ENCODE measurements at regions of chr1 and their contacts with region 1.

Region 1: GRCh38 chr1:66764994-66765578 is 12.8 kb downstream of the DYNLT5 start:
- DNase-seq: peak; percentile 20
- H3K4me3 Mint-ChIP-seq: no peak overlapping the region
- H3K27ac Mint-ChIP-seq: no peak overlapping the region
- H3K4me1 Mint-ChIP-seq: peaks cover 28% of the 10 kb centered on the region
- H3K27me3 Mint-ChIP-seq: no peaks in the 10 kb centered on the region

Region 2: GRCh38 chr1:66788231-66788939 is 23.3 kb after region 1 on chr1:
- intact Hi-C with region 1: loop called (anchors 1 kb)
- DNase-seq: peak; percentile 25
- H3K4me3 Mint-ChIP-seq: peak overlapping the region; percentile 63
- H3K27ac Mint-ChIP-seq: peak overlapping the region; percentile 57
- H3K4me1 Mint-ChIP-seq: peaks cover 24% of the 10 kb centered on the region
- H3K27me3 Mint-ChIP-seq: no peaks in the 10 kb centered on the region

Region 3: DNA sequence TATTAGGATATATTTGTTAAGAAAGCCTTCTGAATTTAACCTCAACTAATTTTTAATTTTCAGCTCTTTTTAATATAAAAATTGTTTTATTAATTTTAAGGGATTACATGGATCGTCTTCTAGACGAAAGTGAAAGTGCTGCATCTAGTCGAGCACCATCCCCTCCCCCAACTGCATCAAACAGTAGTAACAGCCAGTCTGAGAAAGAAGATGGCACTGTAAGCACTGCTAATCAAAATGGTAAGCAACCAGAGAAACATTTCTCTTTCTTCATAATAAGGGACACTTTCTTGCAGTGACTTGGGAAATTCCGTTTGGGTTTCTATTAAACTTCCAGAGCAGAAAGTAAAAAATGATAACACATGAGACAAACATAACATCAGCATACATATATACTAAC is 216.6 kb after region 1 on chr1:
- intact Hi-C with region 1: loop called (anchors 2 kb)
- DNase-seq: peak; percentile 40
- H3K4me3 Mint-ChIP-seq: peak overlapping the region; percentile 69
- H3K27ac Mint-ChIP-seq: peak overlapping the region; percentile 75
- H3K4me1 Mint-ChIP-seq: peaks cover 35% of the 10 kb centered on the region
- H3K27me3 Mint-ChIP-seq: no peaks in the 10 kb centered on the region

Region 4: GRCh38 chr1:67053785-67054772 is 289.0 kb after region 1 on chr1 and contains the start of gene SLC35D1:
- intact Hi-C with region 1: loop called (anchors 1 kb)
- DNase-seq: peak; percentile 75
- H3K4me3 Mint-ChIP-seq: peak within 1 kb of the TSS; percentile 93
- H3K27ac Mint-ChIP-seq: peak within 1 kb of the TSS; percentile 94
- H3K4me1 Mint-ChIP-seq: peaks cover 49% of the 10 kb centered on the region
- H3K27me3 Mint-ChIP-seq: peaks cover 6% of the 10 kb centered on the region
- total RNA-seq, gene SLC35D1: 20.4 and 20.5 TPM in 2 replicates

Region 5: DNA sequence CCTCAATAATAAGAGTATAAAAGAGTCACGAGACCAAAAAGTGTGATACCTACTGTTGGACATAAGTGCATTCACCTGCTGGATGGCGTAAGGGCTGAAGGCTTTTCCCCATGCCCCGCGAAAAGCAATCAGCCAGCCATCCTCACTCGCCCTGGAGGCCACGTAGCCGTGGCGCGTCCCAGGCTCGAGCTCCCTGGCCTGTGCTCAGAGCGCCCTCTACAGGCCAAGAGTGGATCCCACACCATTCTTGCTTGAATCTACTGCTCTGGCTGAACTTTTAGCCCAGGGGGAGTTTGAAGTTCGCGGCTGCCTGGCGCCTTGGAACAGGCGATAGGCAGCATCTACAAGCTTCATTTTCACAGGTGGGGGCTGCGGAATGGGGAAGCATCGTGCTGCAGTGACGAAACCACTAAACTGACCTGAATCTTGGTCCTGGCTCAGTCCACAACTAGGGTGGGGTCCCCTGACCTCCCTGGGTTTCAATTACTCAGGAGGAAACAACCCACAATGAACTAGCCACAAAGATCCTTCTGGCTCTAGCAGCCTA is 735.4 kb after region 1 on chr1:
- intact Hi-C with region 1: loop called (anchors 2 kb)
- DNase-seq: peak; percentile 84
- H3K4me3 Mint-ChIP-seq: no peak overlapping the region
- H3K27ac Mint-ChIP-seq: no peak overlapping the region
- H3K4me1 Mint-ChIP-seq: peaks cover 9% of the 10 kb centered on the region
- H3K27me3 Mint-ChIP-seq: peaks cover 9% of the 10 kb centered on the region